ENCODE measurements at regions of chr14 and their contacts with region 1.

Region 1: GRCh38 chr14:55348766-55349453 is 62.7 kb downstream of the ATG14 start:
- DNase-seq: no peak
- ATAC-seq: peak; percentile 49
- H3K4me3 Mint-ChIP-seq: peak overlapping the region; percentile 3
- H3K27ac Mint-ChIP-seq: peak overlapping the region; percentile 81
- H3K4me1 Mint-ChIP-seq: peaks cover 42% of the 10 kb centered on the region
- H3K27me3 Mint-ChIP-seq: no peaks in the 10 kb centered on the region
- CTCF ChIP-seq: no peak

Region 2: DNA sequence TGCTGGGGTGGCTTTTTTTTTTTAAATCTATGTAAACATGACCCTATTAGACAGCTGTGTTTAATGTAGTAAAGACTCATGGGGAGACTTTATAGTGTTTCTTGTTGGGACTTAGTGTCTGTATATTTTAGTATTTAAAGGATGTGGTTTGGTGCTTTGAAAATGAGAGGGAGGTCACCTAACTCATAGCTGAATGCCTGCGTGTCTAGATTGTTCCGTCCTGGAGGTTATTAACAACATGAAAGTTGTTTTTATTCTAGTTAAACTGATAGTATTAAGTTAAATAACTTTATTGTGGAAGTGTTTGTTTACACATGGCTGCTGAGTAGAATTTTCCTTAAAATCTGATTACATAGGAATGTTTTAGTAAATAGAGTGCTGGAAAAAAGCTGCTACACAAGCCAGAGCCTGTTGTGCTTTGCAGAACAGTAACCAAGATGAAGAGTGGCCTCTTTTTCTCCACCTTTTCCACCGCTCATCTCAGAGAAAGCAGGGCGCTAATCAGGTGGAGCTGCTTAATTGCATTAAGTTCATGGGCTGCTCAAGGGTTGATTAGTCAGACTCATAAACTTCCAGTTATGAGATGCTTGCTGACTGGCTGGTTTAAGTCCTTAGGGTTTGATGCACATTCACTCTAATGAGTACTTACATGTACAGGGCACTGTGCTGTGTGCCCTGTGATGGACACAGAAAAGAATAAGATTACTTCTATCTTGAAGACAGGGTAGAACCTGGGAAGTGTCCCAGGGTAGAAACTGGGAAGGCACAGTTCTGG is 15.0 kb before region 1 on chr14:
- CTCF ChIA-PET with region 1: interaction called, 3 read pairs
- POLR2A ChIA-PET with region 1: no interaction called
- intact Hi-C with region 1: loop called (anchors 1 kb)
- DNase-seq: no peak
- ATAC-seq: peak; percentile 57
- H3K4me3 Mint-ChIP-seq: peak overlapping the region; percentile 44
- H3K27ac Mint-ChIP-seq: peak overlapping the region; percentile 62
- H3K4me1 Mint-ChIP-seq: peaks cover 48% of the 10 kb centered on the region
- H3K27me3 Mint-ChIP-seq: no peaks in the 10 kb centered on the region
- CTCF ChIP-seq: no peak

Region 3: GRCh38 chr14:55361190-55361589 is 12.3 kb after region 1 on chr14:
- CTCF ChIA-PET with region 1: no interaction called
- POLR2A ChIA-PET with region 1: no interaction called
- intact Hi-C with region 1: no loop called
- DNase-seq: no peak
- ATAC-seq: no peak
- H3K4me3 Mint-ChIP-seq: no peak overlapping the region
- H3K27ac Mint-ChIP-seq: no peak overlapping the region
- H3K4me1 Mint-ChIP-seq: no peaks in the 10 kb centered on the region
- H3K27me3 Mint-ChIP-seq: no peaks in the 10 kb centered on the region
- CTCF ChIP-seq: no peak

Region 4: DNA sequence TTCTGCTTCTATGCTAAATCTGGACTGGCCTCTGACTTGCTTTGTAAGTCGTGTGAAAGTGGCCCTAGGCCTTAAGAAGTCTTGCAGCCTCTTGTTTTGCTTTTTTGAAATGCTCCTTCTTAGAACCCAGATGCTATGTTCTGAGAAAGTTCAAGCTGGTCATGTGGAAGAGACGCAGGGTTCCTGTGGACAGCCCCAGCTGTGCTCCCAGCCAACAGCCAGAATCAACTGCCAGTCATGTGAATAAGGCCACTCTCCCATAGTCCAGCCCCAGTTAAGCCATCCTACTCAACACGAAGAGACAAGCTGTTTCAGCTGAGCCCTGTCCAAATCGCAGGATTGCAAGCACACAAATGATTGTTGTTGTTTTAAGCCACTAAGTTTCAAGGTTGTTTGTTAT is 128.8 kb after region 1 on chr14:
- CTCF ChIA-PET with region 1: no interaction called
- POLR2A ChIA-PET with region 1: no interaction called
- intact Hi-C with region 1: no loop called
- DNase-seq: no peak
- ATAC-seq: no peak
- H3K4me3 Mint-ChIP-seq: no peak overlapping the region
- H3K27ac Mint-ChIP-seq: no peak overlapping the region
- H3K4me1 Mint-ChIP-seq: no peaks in the 10 kb centered on the region
- H3K27me3 Mint-ChIP-seq: no peaks in the 10 kb centered on the region
- CTCF ChIP-seq: no peak

Measured in activated B cell treated with CpG ODN at 0.5 μM for 24 hours (primary cell).